Adrenal gland (tissue), 19 donors: ENCODE measurements at regions of chr3 and their contacts with region 1.

Region 1: GRCh38 chr3:141959921-141960554 is 83.6 kb downstream of the ATP1B3 start:
- DNase-seq: no peak
- H3K4me3 ChIP-seq: no peak overlapping the region
- H3K27ac ChIP-seq: peak overlapping the region in 4 of 5 donors; percentile 7 to 70 (median 46)
- H3K4me1 ChIP-seq: peaks cover 9 to 16% of the 10 kb centered on the region in 2 donors
- H3K27me3 ChIP-seq: no peaks in the 10 kb centered on the region
- CTCF ChIP-seq: no peak
- POLR2A ChIP-seq: no peak

Region 2: DNA sequence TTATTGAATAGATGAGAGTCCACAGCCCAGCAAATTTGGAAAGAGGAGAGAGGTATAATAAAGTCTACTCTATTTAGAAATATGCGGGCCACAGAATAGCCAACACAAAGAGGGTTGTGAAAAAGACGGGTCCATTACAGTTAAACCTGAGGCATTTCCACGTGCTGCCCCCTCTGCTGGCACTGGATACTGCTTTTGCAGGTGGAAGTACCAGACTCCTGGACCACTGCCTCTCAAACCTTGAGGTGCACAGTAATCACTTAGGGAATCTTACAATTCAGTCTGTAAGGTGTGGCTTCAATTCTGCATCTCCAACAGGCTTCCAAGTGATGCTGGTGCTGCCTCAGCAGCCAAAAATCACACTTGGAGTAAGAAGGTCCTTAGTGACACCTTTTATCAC is 192.3 kb after region 1 on chr3:
- intact Hi-C with region 1: loop called in 1 of 2 experiments (anchors 10 kb)
- DNase-seq: no peak
- H3K4me3 ChIP-seq: no peak overlapping the region
- H3K27ac ChIP-seq: no peak overlapping the region
- H3K4me1 ChIP-seq: peaks cover 20 to 21% of the 10 kb centered on the region in 2 donors
- H3K27me3 ChIP-seq: no peaks in the 10 kb centered on the region
- CTCF ChIP-seq: no peak
- POLR2A ChIP-seq: no peak